ENCODE measurements at regions of chr18 and their contacts with region 1.

Region 1: GRCh38 chr18:26650310-26651268 is 102.2 kb upstream of the KCTD1 start:
- DNase-seq: no peak
- H3K4me3 Mint-ChIP-seq: no peak overlapping the region
- H3K27ac Mint-ChIP-seq: no peak overlapping the region
- H3K4me1 Mint-ChIP-seq: peaks cover 17% of the 10 kb centered on the region
- H3K27me3 Mint-ChIP-seq: peaks cover 13% of the 10 kb centered on the region
- CTCF ChIP-seq: no peak

Region 2: GRCh38 chr18:26307189-26307773 is 343.3 kb before region 1 on chr18:
- CTCF ChIA-PET with region 1: no interaction called
- intact Hi-C with region 1: loop called (anchors 1 kb)
- DNase-seq: peak; percentile 56
- H3K4me3 Mint-ChIP-seq: no peak overlapping the region
- H3K27ac Mint-ChIP-seq: no peak overlapping the region
- H3K4me1 Mint-ChIP-seq: no peaks in the 10 kb centered on the region
- H3K27me3 Mint-ChIP-seq: no peaks in the 10 kb centered on the region
- CTCF ChIP-seq: peak; percentile 50

Region 3: GRCh38 chr18:26383454-26384270 is 266.9 kb before region 1 on chr18:
- CTCF ChIA-PET with region 1: interaction called, 5 read pairs
- intact Hi-C with region 1: loop called (anchors 2 kb)
- DNase-seq: peak; percentile 22
- H3K4me3 Mint-ChIP-seq: no peak overlapping the region
- H3K27ac Mint-ChIP-seq: no peak overlapping the region
- H3K4me1 Mint-ChIP-seq: peaks cover 41% of the 10 kb centered on the region
- H3K27me3 Mint-ChIP-seq: no peaks in the 10 kb centered on the region
- CTCF ChIP-seq: peak; percentile 73

Region 4: DNA sequence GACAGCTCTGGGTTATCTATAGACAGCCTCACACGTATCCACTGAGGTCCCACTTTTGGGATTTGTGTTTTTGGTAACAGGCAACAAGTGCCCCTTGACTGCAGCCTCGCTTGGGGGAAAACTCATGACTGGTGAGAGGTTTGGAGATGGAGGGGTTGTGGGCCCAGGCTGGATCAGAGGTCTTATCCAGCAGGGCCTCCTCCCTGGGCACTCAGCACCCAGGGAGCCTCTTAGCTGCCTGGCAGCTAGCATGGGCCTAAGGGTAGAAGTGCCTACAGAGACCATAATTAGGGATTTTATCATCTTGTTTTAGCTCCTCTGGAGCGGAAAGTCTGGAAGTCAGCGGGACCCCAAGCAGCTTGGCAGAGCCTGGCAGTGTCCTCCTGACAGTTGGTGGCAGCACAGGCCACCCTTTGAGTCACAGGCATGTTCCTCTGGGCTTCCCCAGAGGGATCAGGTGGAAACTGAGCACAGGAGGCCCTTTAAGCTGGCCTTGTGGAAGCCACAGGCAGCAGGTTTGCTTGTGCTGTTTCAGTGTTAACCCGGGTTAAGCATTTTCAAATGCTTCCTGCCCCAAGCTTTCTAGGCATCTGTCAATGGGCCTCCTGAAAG is 245.3 kb before region 1 on chr18:
- CTCF ChIA-PET with region 1: interaction called, 5 read pairs
- intact Hi-C with region 1: loop called (anchors 1 kb)
- DNase-seq: peak; percentile 73
- H3K4me3 Mint-ChIP-seq: no peak overlapping the region
- H3K27ac Mint-ChIP-seq: peak overlapping the region; percentile 16
- H3K4me1 Mint-ChIP-seq: peaks cover 8% of the 10 kb centered on the region
- H3K27me3 Mint-ChIP-seq: no peaks in the 10 kb centered on the region
- CTCF ChIP-seq: peak; percentile 37

Region 5: DNA sequence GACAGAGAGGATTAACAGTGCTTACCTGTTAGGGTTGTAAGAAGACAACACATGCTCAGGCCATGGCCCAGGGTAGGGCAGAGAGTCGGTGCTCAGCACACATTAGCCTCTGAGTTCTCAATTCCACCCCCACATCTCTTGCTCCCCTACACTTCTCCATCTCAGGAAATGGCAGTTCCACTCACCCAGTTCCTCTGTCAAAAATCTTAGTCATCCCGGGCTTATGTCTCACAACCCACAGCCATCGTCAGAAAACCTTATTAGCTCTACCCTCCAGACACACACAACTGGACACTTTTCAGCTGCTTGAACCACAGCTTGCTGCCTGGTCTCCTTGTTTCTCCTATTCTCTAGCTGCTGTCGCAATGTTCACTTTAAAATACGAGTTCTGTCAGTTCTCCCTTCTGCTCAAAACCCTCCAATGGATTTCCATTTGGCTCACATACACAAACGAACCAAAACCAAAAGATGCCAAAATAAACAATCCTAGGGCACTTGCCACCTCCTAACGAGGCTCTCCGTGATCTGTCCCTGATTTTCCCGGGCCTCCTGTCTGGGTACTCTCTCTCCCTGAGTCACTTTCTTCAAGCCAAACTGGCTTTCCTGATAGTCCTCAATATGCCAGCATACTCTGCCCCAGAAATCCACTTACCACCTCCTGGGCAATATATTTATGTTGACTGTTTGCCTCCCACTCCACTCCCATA is 191.9 kb before region 1 on chr18:
- CTCF ChIA-PET with region 1: no interaction called
- intact Hi-C with region 1: no loop called
- DNase-seq: no peak
- H3K4me3 Mint-ChIP-seq: no peak overlapping the region
- H3K27ac Mint-ChIP-seq: no peak overlapping the region
- H3K4me1 Mint-ChIP-seq: peaks cover 36% of the 10 kb centered on the region
- H3K27me3 Mint-ChIP-seq: no peaks in the 10 kb centered on the region
- CTCF ChIP-seq: no peak

Region 6: DNA sequence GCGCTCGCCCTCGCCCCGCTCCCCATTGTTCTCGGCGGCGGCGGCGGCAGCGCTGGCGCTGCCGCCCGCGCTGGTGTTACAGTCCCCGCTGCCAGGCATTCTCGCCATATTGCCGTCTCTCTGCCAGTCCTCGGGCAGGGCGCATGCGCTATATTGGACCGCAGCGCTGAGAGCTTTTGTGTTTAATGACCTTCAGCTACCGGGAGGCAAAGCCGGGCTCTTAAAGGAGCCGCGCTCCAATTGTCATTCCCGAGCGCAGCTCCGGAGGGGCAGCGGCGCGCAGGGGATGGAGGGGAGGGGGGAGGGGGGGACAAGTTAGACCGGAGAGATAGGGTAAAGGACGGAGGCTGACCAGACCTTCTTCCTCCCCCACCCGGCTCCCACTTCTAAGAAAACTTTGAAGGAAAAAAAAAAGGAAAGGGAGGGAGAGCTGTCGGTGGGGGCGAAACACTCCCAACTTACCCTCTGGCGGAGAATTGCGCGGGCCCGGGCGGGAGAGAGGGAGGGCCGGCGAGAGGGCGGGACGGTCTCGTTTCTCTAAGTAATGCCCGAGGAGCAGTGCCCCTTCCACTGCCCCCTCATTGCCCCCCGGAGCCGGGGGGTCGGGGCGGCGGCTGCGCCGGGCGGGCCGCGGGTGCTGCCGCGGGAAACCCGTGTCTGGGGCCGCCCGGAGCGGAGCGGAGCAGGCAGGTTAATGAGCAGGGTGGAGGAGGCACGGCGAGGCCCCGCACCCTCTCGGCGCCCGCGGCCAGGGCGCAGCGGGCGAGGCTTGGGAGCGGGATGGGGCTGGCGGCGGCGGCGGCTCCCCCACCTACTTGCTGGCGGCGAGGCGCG is 101.9 kb before region 1 on chr18 and contains the start of gene KCTD1:
- CTCF ChIA-PET with region 1: no interaction called
- intact Hi-C with region 1: loop called (anchors 5 kb)
- DNase-seq: peak; percentile 73
- H3K4me3 Mint-ChIP-seq: peak within 1 kb of the TSS; percentile 80
- H3K27ac Mint-ChIP-seq: peak within 1 kb of the TSS; percentile 67
- H3K4me1 Mint-ChIP-seq: peaks cover 32% of the 10 kb centered on the region
- H3K27me3 Mint-ChIP-seq: no peaks in the 10 kb centered on the region
- CTCF ChIP-seq: no peak
- total RNA-seq, gene KCTD1: 54.1 and 63.2 TPM in 2 replicates

Region 7: GRCh38 chr18:26621161-26622026 is 29.2 kb before region 1 on chr18:
- CTCF ChIA-PET with region 1: interaction called, 6 read pairs
- intact Hi-C with region 1: loop called (anchors 1 kb)
- DNase-seq: peak; percentile 77
- H3K4me3 Mint-ChIP-seq: peak overlapping the region; percentile 55
- H3K27ac Mint-ChIP-seq: no peak overlapping the region
- H3K4me1 Mint-ChIP-seq: peaks cover 14% of the 10 kb centered on the region
- H3K27me3 Mint-ChIP-seq: no peaks in the 10 kb centered on the region
- CTCF ChIP-seq: peak; percentile 81

Region 8: DNA sequence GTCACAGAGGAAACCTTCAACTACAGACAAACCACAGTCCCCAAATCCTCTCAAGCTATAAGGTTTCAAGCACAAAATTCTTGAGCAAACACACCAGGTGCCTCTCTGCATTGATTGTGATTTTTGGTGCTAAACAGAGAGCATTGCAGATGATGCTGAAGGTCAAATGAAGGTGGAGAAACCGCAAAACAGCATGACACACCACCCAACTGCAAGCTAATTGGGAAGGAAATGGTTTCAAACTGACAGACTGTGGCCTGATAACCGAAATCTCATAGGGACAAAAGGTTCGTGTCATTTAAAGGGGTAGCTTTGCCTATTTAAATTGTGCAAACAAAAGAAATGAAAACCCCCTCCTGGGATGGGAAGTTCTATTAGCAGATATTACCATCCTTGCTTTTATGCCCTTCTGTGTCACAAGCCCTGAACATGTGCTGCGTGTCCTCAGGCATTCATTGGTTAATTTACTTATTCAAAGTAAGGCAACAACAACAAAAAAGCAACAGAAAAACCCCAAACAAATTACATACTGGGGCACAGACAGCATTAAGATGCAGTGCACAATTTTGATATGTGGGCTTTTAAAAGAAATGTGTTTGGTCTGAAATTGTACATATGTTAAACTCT is 60.0 kb after region 1 on chr18:
- CTCF ChIA-PET with region 1: no interaction called
- intact Hi-C with region 1: no loop called
- DNase-seq: no peak
- H3K4me3 Mint-ChIP-seq: no peak overlapping the region
- H3K27ac Mint-ChIP-seq: no peak overlapping the region
- H3K4me1 Mint-ChIP-seq: peaks cover 14% of the 10 kb centered on the region
- H3K27me3 Mint-ChIP-seq: peaks cover 13% of the 10 kb centered on the region
- CTCF ChIP-seq: no peak